Left ventricle myocardium inferior (tissue), 1 donor: ENCODE measurements at regions of chr1 and their contacts with region 1.

Region 1: DNA sequence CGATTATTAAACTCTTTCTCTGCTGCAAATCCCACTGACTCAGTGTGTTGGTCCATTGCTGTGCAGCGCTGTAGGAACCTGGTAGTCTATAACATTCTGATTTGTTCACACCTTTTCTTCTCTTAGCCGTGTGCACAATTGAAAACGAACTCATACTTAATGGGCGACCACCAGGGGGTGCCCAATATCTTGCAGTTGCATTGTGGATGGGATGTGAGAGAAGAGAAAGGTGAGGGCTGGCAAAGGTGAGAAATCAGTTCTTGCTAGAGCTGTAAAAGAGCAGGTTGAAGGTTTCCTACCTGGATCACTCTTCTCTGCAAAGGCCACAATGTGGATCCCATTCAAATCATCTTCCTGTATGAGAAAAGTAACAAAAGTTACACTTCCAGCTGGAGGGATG is 51.0 kb downstream of the CASQ2 start:
- DNase-seq: no peak
- H3K4me3 ChIP-seq: no peak overlapping the region
- H3K27ac ChIP-seq: no peak overlapping the region
- H3K4me1 ChIP-seq: peaks cover 6% of the 10 kb centered on the region
- H3K27me3 ChIP-seq: no peaks in the 10 kb centered on the region
- CTCF ChIP-seq: peak; percentile 56

Region 2: DNA sequence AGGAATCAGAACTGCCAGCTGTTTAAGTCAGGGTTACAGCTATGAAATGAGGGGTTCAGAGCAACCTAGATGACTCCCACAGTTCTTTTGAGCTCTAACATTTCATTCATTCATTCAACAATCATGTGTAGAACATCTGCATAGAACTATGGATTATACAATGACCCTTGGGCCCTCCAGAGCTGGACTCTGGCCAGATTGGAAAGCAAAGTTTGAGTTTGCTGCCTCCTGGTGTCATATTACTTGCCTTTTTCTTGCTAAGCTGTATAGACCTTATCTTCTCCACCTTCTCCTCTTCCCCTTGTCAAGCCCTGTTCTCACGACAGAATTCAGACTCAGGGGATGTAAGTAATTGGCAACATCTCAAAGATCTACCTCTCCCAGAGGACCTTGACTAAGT is 47.0 kb after region 1 on chr1:
- intact Hi-C with region 1: loop called (anchors 10 kb)
- DNase-seq: no peak
- H3K4me3 ChIP-seq: peak overlapping the region; percentile 67
- H3K27ac ChIP-seq: no peak overlapping the region
- H3K4me1 ChIP-seq: peaks cover 53% of the 10 kb centered on the region
- H3K27me3 ChIP-seq: no peaks in the 10 kb centered on the region
- CTCF ChIP-seq: peak; percentile 58

Region 3: DNA sequence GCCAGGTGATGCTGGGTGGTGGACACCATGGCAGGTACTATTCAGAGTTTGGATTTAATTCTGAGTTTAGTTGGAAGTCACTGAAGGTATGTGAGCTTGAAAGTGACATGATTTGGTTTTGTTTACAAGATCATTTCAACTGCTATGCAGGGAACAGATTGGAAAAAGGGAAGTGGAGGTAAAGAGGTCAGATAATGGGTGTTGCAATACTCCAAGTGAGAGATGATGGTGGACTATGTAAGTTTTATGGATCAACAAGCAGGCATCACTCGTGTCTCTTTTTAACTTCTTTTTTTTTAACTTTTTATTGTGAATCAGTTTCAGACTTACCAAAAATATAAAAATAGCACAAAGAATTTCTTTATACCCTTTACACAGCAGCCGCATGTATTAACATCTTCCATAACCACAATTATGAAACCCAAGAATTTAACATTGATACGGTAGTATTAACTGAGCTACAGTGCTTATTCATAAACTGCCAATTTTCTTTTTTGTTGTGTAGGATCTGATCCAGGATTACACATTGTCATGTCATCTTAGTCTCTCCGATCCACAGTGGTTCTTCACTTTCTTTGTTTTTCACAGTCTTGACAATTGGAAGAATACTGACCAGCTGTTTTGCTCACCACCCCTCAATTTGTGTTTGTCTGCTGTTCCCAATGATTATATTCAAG is 148.3 kb after region 1 on chr1:
- intact Hi-C with region 1: no loop called
- DNase-seq: no peak
- H3K4me3 ChIP-seq: no peak overlapping the region
- H3K27ac ChIP-seq: no peak overlapping the region
- H3K4me1 ChIP-seq: no peaks in the 10 kb centered on the region
- H3K27me3 ChIP-seq: peaks cover 33% of the 10 kb centered on the region
- CTCF ChIP-seq: no peak